Endothelial cell of umbilical vein (primary cell): ENCODE measurements at regions of chr7 and their contacts with region 1.

Region 1: GRCh38 chr7:75738987-75739795 is 450 bp upstream of the HIP1 start:
- DNase-seq: peak; percentile 97
- H3K4me3 ChIP-seq: peak overlapping the region; percentile 54 to 99 (median 91)
- H3K27ac ChIP-seq: peak overlapping the region; percentile 55
- H3K4me1 ChIP-seq: peaks cover 6% of the 10 kb centered on the region
- H3K27me3 ChIP-seq: no peaks in the 10 kb centered on the region
- CTCF ChIP-seq: no peak
- POLR2A ChIP-seq: no peak

Region 2: GRCh38 chr7:75599244-75599781 is 139.9 kb before region 1 on chr7:
- CTCF ChIA-PET with region 1: no interaction called
- POLR2A ChIA-PET with region 1: no interaction called
- dilution Hi-C with region 1: no loop called
- intact Hi-C with region 1: loop called (anchors 2 kb)
- DNase-seq: peak; percentile 85
- H3K4me3 ChIP-seq: no peak overlapping the region
- H3K27ac ChIP-seq: peak overlapping the region; percentile 74
- H3K4me1 ChIP-seq: peaks cover 30% of the 10 kb centered on the region
- H3K27me3 ChIP-seq: no peaks in the 10 kb centered on the region
- CTCF ChIP-seq: peak in 1 of 2 donors; percentile 2
- POLR2A ChIP-seq: no peak

Region 3: DNA sequence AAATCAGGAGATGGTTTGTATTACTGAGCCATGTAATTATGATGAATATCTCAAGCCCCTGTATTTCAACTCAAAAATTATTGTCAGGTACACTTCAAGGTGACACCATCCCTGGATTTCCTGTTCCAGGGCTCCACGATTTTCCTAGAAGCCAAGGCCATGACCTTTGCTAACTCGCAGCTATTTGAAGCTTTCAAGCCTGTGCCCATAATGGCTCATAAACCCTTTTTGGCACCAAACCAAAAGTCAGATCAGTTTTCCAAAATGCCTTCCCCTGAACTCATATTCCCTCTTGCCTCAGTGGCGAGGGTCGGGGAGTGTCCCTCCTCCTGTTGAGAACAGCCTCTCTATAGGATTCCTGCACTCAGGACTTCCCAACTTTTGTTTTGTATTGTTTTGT is 71.3 kb before region 1 on chr7:
- CTCF ChIA-PET with region 1: no interaction called
- POLR2A ChIA-PET with region 1: no interaction called
- dilution Hi-C with region 1: no loop called
- intact Hi-C with region 1: loop called (anchors 2 kb)
- DNase-seq: no peak
- H3K4me3 ChIP-seq: no peak overlapping the region
- H3K27ac ChIP-seq: no peak overlapping the region
- H3K4me1 ChIP-seq: peaks cover 17% of the 10 kb centered on the region
- H3K27me3 ChIP-seq: no peaks in the 10 kb centered on the region
- CTCF ChIP-seq: no peak
- POLR2A ChIP-seq: no peak

Region 4: DNA sequence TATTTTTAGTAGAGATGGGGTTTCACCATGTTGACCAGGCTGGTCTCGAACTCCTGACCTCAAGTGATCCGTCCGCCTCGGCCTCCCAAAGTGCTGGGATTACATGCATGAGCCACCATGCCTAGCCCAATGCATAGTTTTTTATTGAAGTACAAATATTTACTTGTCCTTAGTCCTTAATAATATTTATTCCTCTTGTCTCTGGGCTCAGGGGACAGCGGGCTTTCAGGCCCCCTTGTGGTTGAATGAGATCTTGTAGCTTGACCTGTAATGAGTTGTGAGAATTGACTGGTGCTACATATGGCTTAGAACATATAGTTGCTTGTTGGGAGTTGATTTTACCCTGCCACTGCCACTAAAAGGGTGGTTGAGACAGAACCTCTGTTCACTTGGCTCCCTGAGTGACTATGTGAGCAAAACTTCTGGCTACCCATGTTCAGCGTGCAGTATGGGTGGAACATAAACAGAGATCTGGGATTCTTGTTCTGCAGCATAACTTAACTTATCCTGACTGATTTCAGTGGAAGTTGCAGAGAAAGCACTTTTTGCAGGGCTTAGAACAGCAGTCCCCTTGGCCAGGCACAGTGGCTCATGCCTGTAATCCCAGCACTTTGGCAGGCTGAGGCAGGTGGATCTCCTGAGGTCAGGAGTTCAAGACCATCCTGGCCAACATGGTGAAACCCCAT is 17.9 kb after region 1 on chr7:
- CTCF ChIA-PET with region 1: interaction called, 12 read pairs
- POLR2A ChIA-PET with region 1: no interaction called
- dilution Hi-C with region 1: no loop called
- intact Hi-C with region 1: no loop called
- DNase-seq: peak; percentile 64
- H3K4me3 ChIP-seq: no peak overlapping the region
- H3K27ac ChIP-seq: no peak overlapping the region
- H3K4me1 ChIP-seq: no peaks in the 10 kb centered on the region
- H3K27me3 ChIP-seq: no peaks in the 10 kb centered on the region
- CTCF ChIP-seq: peak; percentile 41 to 54
- POLR2A ChIP-seq: no peak